ENCODE measurements at regions of chr4 and their contacts with region 1.

Region 1: GRCh38 chr4:70151271-70151670 is 2.8 kb upstream of the PRR27 start:
- DNase-seq: no peak
- H3K4me3 ChIP-seq: no peak overlapping the region
- CTCF ChIP-seq: no peak

Region 2: GRCh38 chr4:69773484-69773883 is 377.8 kb before region 1 on chr4:
- in situ Hi-C with region 1: no loop called
- DNase-seq: no peak
- H3K4me3 ChIP-seq: no peak overlapping the region
- CTCF ChIP-seq: no peak

Region 3: DNA sequence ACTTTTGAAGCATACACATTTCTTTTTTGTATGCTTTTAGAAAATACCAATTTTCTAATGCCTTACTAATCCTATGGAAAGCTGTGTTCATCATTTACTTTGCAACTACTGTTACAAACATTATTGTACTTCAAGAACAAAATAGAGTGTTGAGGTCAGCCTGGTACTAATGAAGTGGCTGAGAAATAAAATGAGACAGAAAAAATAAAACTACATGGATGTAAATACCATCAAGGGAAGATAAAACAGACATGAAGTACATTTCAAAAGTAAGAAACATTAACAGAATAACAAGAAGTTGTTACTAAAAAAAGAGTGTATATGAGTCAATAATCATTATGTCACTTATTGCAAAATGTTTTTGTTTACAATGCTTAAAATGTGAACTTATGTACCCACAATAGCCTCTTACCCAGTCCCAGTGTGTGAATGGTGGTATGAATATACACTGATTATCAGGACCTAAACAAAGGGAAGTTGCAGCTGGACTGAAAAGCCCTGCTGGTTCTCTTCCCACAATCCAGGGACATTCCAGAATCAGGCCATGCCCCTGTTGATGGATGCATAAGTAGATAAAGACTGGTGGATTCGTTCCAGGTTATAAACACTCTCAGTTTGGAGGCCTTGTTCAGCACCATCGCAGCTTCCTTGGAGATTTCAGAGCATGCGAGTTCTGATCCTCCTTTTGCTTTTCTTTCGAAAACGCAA is 88.8 kb after region 1 on chr4:
- in situ Hi-C with region 1: loop called (anchors 5 kb)
- DNase-seq: no peak
- H3K4me3 ChIP-seq: no peak overlapping the region
- CTCF ChIP-seq: no peak